Mammary epithelial cell (primary cell): ENCODE measurements at regions of chr19 and their contacts with region 1.

Region 1: GRCh38 chr19:17932485-17933338 is at the start of gene CCDC124:
- DNase-seq: peak; percentile 90
- H3K4me3 ChIP-seq: peak within 1 kb of the TSS; percentile 92 to 96 (median 94)
- H3K27ac ChIP-seq: peak within 1 kb of the TSS; percentile 95
- H3K4me1 ChIP-seq: peaks cover 18% of the 10 kb centered on the region
- H3K27me3 ChIP-seq: no peaks in the 10 kb centered on the region
- CTCF ChIP-seq: peak; percentile 92 to 99
- total RNA-seq, gene CCDC124: 20.3 to 100 TPM

Region 2: DNA sequence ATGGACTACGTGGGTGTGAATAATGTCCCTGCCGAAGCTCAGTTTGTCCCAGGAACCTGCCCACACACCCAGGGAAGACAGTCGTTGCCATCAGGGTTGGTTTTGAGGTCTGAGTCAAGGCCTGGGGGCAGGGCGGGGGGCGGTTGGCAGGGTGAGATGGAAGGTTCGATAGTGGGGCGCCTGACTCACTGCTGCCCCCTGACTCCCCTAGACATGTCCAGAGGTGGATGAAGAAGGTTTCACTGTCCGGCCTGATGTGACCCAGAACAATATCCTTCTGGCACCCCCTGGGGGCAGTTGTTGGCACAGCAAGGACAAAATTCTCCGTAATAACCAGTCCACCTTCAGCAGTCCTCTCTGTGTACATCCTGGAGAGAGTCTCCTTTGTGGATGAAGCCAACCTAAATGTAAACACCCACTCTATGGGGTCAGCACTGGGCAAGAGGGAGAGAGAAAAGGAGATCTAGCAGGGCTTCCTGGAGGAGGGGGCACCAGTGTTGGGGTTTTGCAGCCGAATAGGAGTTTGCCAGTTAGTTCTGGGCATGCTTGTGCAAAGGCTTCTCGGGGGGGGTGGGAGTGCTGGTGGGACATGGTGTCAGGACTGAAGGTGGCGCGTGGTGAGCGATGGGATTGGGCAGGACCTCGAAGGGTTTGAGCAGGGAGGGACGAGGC is 157.3 kb before region 1 on chr19:
- CTCF ChIA-PET with region 1: no interaction called
- dilution Hi-C with region 1: no loop called
- in situ Hi-C with region 1: no loop called
- intact Hi-C with region 1: loop called (anchors 5 kb)
- DNase-seq: no peak
- H3K4me3 ChIP-seq: no peak overlapping the region
- H3K27ac ChIP-seq: no peak overlapping the region
- H3K4me1 ChIP-seq: peaks cover 10% of the 10 kb centered on the region
- H3K27me3 ChIP-seq: no peaks in the 10 kb centered on the region
- CTCF ChIP-seq: peak; percentile 68 to 74

Region 3: GRCh38 chr19:17854061-17854460 is 78.7 kb before region 1 on chr19:
- CTCF ChIA-PET with region 1: interaction called, 39 read pairs
- dilution Hi-C with region 1: loop called (anchors 5 kb)
- in situ Hi-C with region 1: no loop called
- intact Hi-C with region 1: loop called (anchors 1 kb)
- DNase-seq: no peak
- H3K4me3 ChIP-seq: no peak overlapping the region
- H3K27ac ChIP-seq: no peak overlapping the region
- H3K4me1 ChIP-seq: peaks cover 9% of the 10 kb centered on the region
- H3K27me3 ChIP-seq: no peaks in the 10 kb centered on the region
- CTCF ChIP-seq: no peak

Region 4: GRCh38 chr19:17865364-17866311 is 67.1 kb before region 1 on chr19:
- CTCF ChIA-PET with region 1: interaction called, 33 read pairs
- dilution Hi-C with region 1: no loop called
- in situ Hi-C with region 1: loop called in 1 of 2 experiments (anchors 5 kb)
- intact Hi-C with region 1: loop called (anchors 1 kb)
- DNase-seq: peak; percentile 45
- H3K4me3 ChIP-seq: no peak overlapping the region
- H3K27ac ChIP-seq: no peak overlapping the region
- H3K4me1 ChIP-seq: peaks cover 8% of the 10 kb centered on the region
- H3K27me3 ChIP-seq: no peaks in the 10 kb centered on the region
- CTCF ChIP-seq: no peak

Region 5: GRCh38 chr19:17873786-17874757 is 58.6 kb before region 1 on chr19:
- CTCF ChIA-PET with region 1: interaction called, 33 read pairs
- dilution Hi-C with region 1: no loop called
- in situ Hi-C with region 1: loop called (anchors 5 kb)
- intact Hi-C with region 1: loop called (anchors 1 kb)
- DNase-seq: peak; percentile 37
- H3K4me3 ChIP-seq: peak overlapping the region in 2 of 3 experiments; percentile 2 to 6
- H3K27ac ChIP-seq: no peak overlapping the region
- H3K4me1 ChIP-seq: peaks cover 5% of the 10 kb centered on the region
- H3K27me3 ChIP-seq: peaks cover 9% of the 10 kb centered on the region
- CTCF ChIP-seq: no peak

Region 6: DNA sequence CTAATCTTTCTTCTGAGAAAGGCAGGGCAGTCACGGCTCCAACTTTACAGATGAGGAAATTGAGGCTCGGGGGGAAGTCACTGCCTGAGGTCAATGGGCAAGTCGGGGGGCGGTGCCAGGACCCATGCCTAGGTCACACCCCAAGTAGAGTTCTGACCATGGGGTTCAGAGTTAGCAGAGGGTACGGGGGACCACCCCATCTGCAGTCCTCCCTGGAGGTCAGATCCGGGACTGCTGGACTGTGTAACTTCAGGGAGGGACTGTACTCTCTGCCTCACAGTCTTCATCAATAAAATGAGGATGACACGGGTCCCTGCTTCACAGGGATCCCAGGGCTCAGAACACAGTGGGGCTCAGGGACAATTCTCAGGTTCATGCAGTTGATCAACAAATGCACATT is 53.2 kb before region 1 on chr19:
- CTCF ChIA-PET with region 1: no interaction called
- dilution Hi-C with region 1: no loop called
- in situ Hi-C with region 1: loop called in 1 of 2 experiments (anchors 5 kb)
- intact Hi-C with region 1: no loop called
- DNase-seq: no peak
- H3K4me3 ChIP-seq: no peak overlapping the region
- H3K27ac ChIP-seq: no peak overlapping the region
- H3K4me1 ChIP-seq: no peaks in the 10 kb centered on the region
- H3K27me3 ChIP-seq: no peaks in the 10 kb centered on the region
- CTCF ChIP-seq: no peak

Region 7: DNA sequence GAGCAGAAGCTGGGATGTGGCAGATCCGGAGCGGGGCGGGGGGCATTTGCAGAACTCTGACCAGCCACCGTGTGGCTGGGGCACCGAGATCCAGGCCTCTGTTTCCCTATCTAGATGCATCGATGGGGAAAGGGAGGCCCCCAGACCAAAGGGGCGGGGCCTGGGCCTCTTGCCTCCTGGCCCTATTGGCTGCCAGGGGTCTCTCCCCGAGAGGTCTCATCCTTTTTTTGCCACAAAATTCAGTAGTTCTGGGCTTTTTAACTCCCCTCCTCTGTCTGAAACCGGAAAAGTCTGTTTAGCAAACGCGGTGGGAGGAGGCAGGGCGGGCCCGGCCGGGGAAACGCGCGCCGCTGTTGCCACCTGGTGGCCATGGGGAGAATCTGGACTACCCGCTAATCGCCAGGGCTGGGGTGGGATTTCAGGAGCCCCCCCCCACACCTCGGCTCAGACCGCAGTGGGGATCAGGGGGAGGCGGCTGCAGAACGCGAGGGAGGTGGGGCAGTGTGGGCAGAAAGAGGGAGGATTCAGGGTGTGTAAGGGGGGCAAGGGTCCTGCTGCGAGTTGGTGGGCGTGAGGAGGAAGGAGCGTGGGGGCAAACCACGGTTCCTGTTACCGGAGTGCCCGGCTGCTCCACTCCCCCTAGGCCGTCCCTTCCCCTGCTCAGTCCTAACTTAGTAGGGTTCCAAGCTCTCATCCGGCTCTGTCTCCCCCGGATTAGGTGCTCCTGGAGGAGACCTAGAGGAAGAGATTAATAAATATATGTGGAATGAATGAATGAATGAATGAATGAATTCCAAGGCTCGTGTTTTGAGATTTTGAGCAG is 125.7 kb after region 1 on chr19:
- CTCF ChIA-PET with region 1: interaction called, 6 read pairs
- dilution Hi-C with region 1: no loop called
- in situ Hi-C with region 1: loop called in 1 of 2 experiments (anchors 25 kb)
- intact Hi-C with region 1: no loop called
- DNase-seq: peak; percentile 42
- H3K4me3 ChIP-seq: no peak overlapping the region
- H3K27ac ChIP-seq: no peak overlapping the region
- H3K4me1 ChIP-seq: peaks cover 3% of the 10 kb centered on the region
- H3K27me3 ChIP-seq: peaks cover 2% of the 10 kb centered on the region
- CTCF ChIP-seq: peak; percentile 51 to 89